ENCODE measurements at regions of chr1 and their contacts with region 1.

Region 1: GRCh38 chr1:96872757-96873156 is 151.2 kb downstream of the PTBP2 start:
- DNase-seq: no peak
- H3K4me3 ChIP-seq: no peak overlapping the region
- H3K27ac ChIP-seq: no peak overlapping the region
- H3K4me1 ChIP-seq: no peaks in the 10 kb centered on the region
- H3K27me3 ChIP-seq: no peaks in the 10 kb centered on the region
- CTCF ChIP-seq: no peak
- POLR2A ChIP-seq: no peak

Region 2: DNA sequence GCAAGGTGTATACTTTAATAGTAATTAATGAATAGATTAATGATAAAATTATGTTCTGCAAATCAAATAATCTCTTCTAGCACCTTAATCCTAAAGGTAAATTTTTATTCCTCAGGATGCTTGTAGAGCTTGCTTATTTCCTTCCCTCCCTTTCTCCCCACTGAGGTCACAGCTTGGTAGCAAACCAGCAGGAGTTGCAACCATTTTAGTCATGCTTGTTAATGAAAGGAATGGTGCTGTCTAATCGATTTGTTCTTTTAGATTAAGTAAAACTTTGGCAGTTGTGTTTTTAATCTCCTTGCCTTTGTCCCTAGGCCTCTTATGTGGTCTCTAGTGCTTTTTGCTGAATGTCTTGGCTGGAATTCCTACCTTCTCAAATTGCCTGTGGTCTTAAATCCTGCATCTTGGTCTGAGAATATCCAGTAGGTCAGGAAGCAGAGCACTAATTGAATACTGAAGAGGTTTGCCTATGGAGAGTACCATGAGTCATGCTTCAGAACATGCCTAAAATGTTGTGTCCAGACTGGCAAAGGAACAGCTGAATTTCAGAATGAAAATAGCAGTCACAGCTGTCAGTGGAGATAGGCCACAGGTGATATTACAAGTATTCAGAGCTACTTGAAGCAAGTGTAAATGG is 1675.0 kb before region 1 on chr1:
- intact Hi-C with region 1: loop called (anchors 10 kb)
- DNase-seq: no peak
- H3K4me3 ChIP-seq: no peak overlapping the region
- H3K27ac ChIP-seq: no peak overlapping the region
- H3K4me1 ChIP-seq: no peaks in the 10 kb centered on the region
- H3K27me3 ChIP-seq: no peaks in the 10 kb centered on the region
- CTCF ChIP-seq: no peak
- POLR2A ChIP-seq: no peak

Region 3: GRCh38 chr1:95809391-95809790 is 1063.4 kb before region 1 on chr1:
- intact Hi-C with region 1: no loop called
- DNase-seq: no peak
- H3K4me3 ChIP-seq: no peak overlapping the region
- H3K27ac ChIP-seq: no peak overlapping the region
- H3K4me1 ChIP-seq: no peaks in the 10 kb centered on the region
- H3K27me3 ChIP-seq: no peaks in the 10 kb centered on the region
- CTCF ChIP-seq: no peak
- POLR2A ChIP-seq: no peak